ENCODE measurements at regions of chrX and their contacts with region 1.

Region 1: GRCh38 chrX:120213436-120214265 is 37.0 kb upstream of the ZBTB33 start:
- DNase-seq: peak; percentile 60
- ATAC-seq: peak; percentile 53
- H3K4me3 ChIP-seq: no peak overlapping the region
- H3K4me3 Mint-ChIP-seq: no peak overlapping the region
- H3K27ac ChIP-seq: no peak overlapping the region
- H3K27ac Mint-ChIP-seq: no peak overlapping the region
- H3K4me1 ChIP-seq: no peaks in the 10 kb centered on the region
- H3K4me1 Mint-ChIP-seq: peaks cover 3% of the 10 kb centered on the region
- H3K27me3 ChIP-seq: no peaks in the 10 kb centered on the region
- H3K27me3 Mint-ChIP-seq: no peaks in the 10 kb centered on the region
- CTCF ChIP-seq: peak; percentile 72

Region 2: GRCh38 chrX:119981286-119982070 is 232.2 kb before region 1 on chrX:
- CTCF ChIA-PET with region 1: interaction called, 27 read pairs
- POLR2A ChIA-PET with region 1: no interaction called
- intact Hi-C with region 1: no loop called
- DNase-seq: peak; percentile 43
- ATAC-seq: peak; percentile 33
- H3K4me3 ChIP-seq: no peak overlapping the region
- H3K4me3 Mint-ChIP-seq: no peak overlapping the region
- H3K27ac ChIP-seq: no peak overlapping the region
- H3K27ac Mint-ChIP-seq: no peak overlapping the region
- H3K4me1 ChIP-seq: no peaks in the 10 kb centered on the region
- H3K4me1 Mint-ChIP-seq: no peaks in the 10 kb centered on the region
- H3K27me3 ChIP-seq: peaks cover 0 to 12% (median 1%) of the 10 kb centered on the region in 4 experiments
- H3K27me3 Mint-ChIP-seq: peaks cover 9% of the 10 kb centered on the region
- CTCF ChIP-seq: peak; percentile 46

Region 3: GRCh38 chrX:120228187-120228908 is 14.7 kb after region 1 on chrX:
- CTCF ChIA-PET with region 1: interaction called, 18 read pairs
- POLR2A ChIA-PET with region 1: no interaction called
- intact Hi-C with region 1: no loop called
- DNase-seq: no peak
- ATAC-seq: no peak
- H3K4me3 ChIP-seq: no peak overlapping the region
- H3K4me3 Mint-ChIP-seq: no peak overlapping the region
- H3K27ac ChIP-seq: no peak overlapping the region
- H3K27ac Mint-ChIP-seq: no peak overlapping the region
- H3K4me1 ChIP-seq: no peaks in the 10 kb centered on the region
- H3K4me1 Mint-ChIP-seq: no peaks in the 10 kb centered on the region
- H3K27me3 ChIP-seq: no peaks in the 10 kb centered on the region
- H3K27me3 Mint-ChIP-seq: no peaks in the 10 kb centered on the region
- CTCF ChIP-seq: no peak

Region 4: GRCh38 chrX:120629667-120630537 is 416.3 kb after region 1 on chrX and contains the start of gene C1GALT1C1:
- CTCF ChIA-PET with region 1: no interaction called
- POLR2A ChIA-PET with region 1: no interaction called
- intact Hi-C with region 1: no loop called
- DNase-seq: peak; percentile 94
- ATAC-seq: peak; percentile 92
- H3K4me3 ChIP-seq: peak within 1 kb of the TSS; percentile 62 to 81 (median 69)
- H3K4me3 Mint-ChIP-seq: peak within 1 kb of the TSS; percentile 95
- H3K27ac ChIP-seq: peak within 1 kb of the TSS; percentile 95 to 96
- H3K27ac Mint-ChIP-seq: peak within 1 kb of the TSS; percentile 97
- H3K4me1 ChIP-seq: peaks cover 12 to 18% of the 10 kb centered on the region in 2 donors
- H3K4me1 Mint-ChIP-seq: peaks cover 14% of the 10 kb centered on the region
- H3K27me3 ChIP-seq: no peaks in the 10 kb centered on the region
- H3K27me3 Mint-ChIP-seq: no peaks in the 10 kb centered on the region
- CTCF ChIP-seq: no peak
- total RNA-seq, gene C1GALT1C1: 11.6 and 13.6 TPM in 2 replicates

Measured in B cell (primary cell).